ENCODE measurements at regions of chr15 and their contacts with region 1.

Region 1: DNA sequence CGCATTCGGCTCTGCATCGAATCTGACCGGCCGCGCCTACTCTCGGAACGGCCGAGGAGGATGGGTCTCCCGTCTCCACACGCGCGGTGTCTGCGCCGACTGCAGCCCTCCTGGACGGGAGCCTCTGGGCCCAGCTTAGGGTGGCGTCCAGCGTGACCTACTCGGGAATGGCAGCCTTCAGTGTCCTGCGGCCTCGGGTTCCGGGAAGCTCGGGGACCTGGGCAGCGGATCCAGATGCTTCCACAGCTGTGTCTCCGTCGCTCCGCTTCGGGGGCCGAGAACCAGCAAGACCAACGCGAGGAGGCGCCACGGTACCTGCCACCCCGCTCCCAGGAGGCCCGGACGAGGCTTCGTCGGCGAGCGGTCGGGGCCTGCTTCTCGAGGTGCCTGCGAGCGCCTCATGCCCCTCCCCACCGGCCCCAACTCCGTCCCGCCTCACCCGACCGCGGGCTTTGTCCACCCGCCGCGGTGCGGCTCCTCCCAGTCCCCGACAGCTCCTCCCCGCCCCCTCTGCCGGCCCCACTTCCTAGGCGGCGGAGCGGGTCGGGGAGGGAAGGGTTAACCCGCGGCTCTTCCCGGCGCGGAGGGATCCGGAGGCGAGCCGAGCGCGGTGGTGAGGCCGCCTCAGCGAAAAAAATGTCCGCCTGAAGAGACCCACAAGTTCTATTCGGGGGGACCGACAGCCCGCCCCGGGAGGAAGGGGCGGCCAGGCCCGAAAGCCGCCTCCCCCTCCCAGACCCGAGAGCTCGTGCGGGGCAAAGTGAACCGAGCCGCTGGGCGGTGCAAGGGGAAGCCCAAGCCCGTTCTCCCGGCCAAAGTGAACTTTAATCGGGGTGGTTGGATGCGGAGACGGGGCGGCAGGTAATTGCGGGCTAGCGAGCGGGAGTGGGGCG is at the start of gene TCF12:
- DNase-seq: peak; percentile 92
- ATAC-seq: peak; percentile 81
- H3K4me3 Mint-ChIP-seq: peak within 1 kb of the TSS; percentile 92
- H3K27ac Mint-ChIP-seq: peak within 1 kb of the TSS; percentile 80
- H3K4me1 Mint-ChIP-seq: peaks cover 32% of the 10 kb centered on the region
- H3K27me3 Mint-ChIP-seq: no peaks in the 10 kb centered on the region
- CTCF ChIP-seq: no peak
- total RNA-seq, gene TCF12: 88.5 and 119 TPM in 2 replicates

Region 2: DNA sequence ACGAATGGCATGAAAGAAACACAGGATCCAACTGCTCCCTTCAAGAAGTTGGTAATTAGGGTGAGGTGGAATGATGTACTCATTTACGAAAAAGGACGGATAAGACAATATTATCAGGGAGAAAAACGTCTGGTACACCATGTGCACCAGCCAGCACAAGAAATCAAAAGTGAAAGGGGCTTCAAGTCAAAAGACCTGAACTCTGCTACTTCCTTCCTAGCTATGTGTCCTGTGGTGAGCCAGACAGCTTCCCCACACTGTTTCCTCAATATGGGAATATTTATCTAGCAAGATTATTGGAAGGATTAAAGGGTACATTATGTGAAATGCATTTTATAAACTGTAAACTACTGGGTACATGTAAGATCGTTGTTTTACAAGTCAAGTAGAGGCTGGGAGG is 1662.6 kb before region 1 on chr15:
- CTCF ChIA-PET with region 1: no interaction called
- POLR2A ChIA-PET with region 1: no interaction called
- intact Hi-C with region 1: no loop called
- DNase-seq: no peak
- ATAC-seq: peak; percentile 47
- H3K4me3 Mint-ChIP-seq: peak overlapping the region; percentile 74
- H3K27ac Mint-ChIP-seq: peak overlapping the region; percentile 86
- H3K4me1 Mint-ChIP-seq: peaks cover 64% of the 10 kb centered on the region
- H3K27me3 Mint-ChIP-seq: no peaks in the 10 kb centered on the region
- CTCF ChIP-seq: no peak

Region 3: DNA sequence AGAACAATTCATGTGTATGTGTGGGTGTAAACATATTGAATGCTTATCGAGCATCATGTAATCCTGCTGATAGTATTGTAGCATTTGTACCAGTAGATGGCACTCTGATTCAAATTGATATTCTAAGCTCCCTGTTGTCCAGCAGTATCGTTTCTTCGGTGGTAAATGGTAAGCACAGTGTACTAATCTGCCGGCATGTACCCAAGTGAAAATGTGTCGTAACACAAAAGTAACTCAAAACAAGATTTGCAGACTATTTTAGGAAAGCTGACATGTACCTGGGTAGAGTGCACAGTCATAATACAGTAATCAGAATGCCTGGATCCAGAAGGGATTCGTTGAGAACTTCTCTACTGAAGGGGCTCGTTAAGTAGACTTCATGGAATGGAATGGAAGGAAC is 421.7 kb before region 1 on chr15:
- CTCF ChIA-PET with region 1: interaction called, 4 read pairs
- POLR2A ChIA-PET with region 1: interaction called, 3 read pairs
- intact Hi-C with region 1: loop called (anchors 2 kb)
- DNase-seq: no peak
- ATAC-seq: peak; percentile 81
- H3K4me3 Mint-ChIP-seq: peak overlapping the region; percentile 20
- H3K27ac Mint-ChIP-seq: no peak overlapping the region
- H3K4me1 Mint-ChIP-seq: peaks cover 4% of the 10 kb centered on the region
- H3K27me3 Mint-ChIP-seq: no peaks in the 10 kb centered on the region
- CTCF ChIP-seq: no peak

Region 4: DNA sequence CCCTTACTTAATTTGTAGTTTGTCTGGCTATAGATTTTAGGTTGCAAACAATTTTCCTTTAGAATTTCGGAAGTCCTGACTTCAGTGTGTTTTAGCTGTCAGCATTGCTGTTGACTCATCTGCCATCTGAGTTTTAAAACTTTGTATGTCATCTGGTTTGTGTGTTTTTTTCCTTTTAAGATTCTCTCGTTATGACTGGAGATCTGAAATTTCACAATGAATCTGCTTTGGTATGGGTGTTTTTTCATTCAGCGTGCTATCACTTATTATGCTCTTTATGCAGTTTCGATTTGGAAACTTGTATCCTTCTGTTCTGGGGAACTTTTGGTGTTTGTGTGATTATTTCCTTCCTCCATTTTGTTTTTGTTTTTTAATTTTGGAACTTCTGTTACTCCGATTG is 131.3 kb before region 1 on chr15:
- CTCF ChIA-PET with region 1: no interaction called
- POLR2A ChIA-PET with region 1: no interaction called
- intact Hi-C with region 1: no loop called
- DNase-seq: no peak
- ATAC-seq: peak; percentile 31
- H3K4me3 Mint-ChIP-seq: no peak overlapping the region
- H3K27ac Mint-ChIP-seq: no peak overlapping the region
- H3K4me1 Mint-ChIP-seq: peaks cover 6% of the 10 kb centered on the region
- H3K27me3 Mint-ChIP-seq: no peaks in the 10 kb centered on the region
- CTCF ChIP-seq: no peak

Region 5: DNA sequence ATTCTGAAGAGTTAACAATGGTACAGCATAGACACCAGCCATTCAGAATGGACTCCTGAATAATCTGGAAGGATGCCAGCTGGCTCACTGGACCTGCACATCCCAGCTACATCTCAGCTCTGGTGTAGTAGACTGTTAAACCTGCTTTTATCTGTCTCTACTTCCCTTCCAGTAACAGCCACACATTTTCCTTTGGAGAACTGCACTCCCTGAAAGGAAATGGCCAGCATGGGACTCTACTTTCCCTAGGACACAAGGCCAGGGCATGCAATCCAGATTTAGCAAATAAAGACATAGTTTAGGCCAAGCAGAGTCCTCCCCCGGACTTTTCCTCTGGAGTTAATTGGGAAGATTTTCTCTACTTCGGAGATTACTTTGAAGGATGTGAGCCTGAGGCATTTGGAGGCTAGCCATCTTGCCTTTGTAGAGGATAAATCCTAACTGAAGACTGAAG is 82.5 kb before region 1 on chr15:
- CTCF ChIA-PET with region 1: no interaction called
- POLR2A ChIA-PET with region 1: no interaction called
- intact Hi-C with region 1: loop called (anchors 2 kb)
- DNase-seq: no peak
- ATAC-seq: no peak
- H3K4me3 Mint-ChIP-seq: no peak overlapping the region
- H3K27ac Mint-ChIP-seq: no peak overlapping the region
- H3K4me1 Mint-ChIP-seq: peaks cover 38% of the 10 kb centered on the region
- H3K27me3 Mint-ChIP-seq: no peaks in the 10 kb centered on the region
- CTCF ChIP-seq: no peak

Region 6: GRCh38 chr15:57036352-57036751 is 118.1 kb after region 1 on chr15:
- CTCF ChIA-PET with region 1: no interaction called
- POLR2A ChIA-PET with region 1: no interaction called
- intact Hi-C with region 1: loop called (anchors 5 kb)
- DNase-seq: no peak
- ATAC-seq: no peak
- H3K4me3 Mint-ChIP-seq: no peak overlapping the region
- H3K27ac Mint-ChIP-seq: no peak overlapping the region
- H3K4me1 Mint-ChIP-seq: peaks cover 63% of the 10 kb centered on the region
- H3K27me3 Mint-ChIP-seq: no peaks in the 10 kb centered on the region
- CTCF ChIP-seq: no peak

Region 7: DNA sequence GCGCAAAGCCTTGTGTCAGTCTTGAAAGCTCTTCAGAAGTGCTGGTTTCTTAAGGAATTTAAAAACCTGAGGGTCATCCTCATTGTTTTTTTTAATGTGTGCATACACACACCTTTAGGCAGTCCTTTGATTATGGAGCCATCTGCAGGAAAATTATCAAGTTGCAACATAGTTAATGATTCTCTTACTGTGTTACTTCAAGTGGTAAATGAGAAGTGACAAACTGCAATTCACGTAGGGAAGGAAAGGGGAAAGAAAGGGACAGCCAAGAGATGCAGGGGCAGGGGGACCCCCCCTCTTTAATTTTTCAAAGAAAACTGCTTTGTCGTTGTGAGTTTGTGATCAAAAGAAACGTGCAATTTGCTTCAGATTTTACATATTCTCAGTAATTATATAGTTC is 295.6 kb after region 1 on chr15:
- CTCF ChIA-PET with region 1: interaction called, 4 read pairs
- POLR2A ChIA-PET with region 1: no interaction called
- intact Hi-C with region 1: loop called (anchors 1 kb)
- DNase-seq: no peak
- ATAC-seq: peak; percentile 65
- H3K4me3 Mint-ChIP-seq: no peak overlapping the region
- H3K27ac Mint-ChIP-seq: no peak overlapping the region
- H3K4me1 Mint-ChIP-seq: peaks cover 32% of the 10 kb centered on the region
- H3K27me3 Mint-ChIP-seq: no peaks in the 10 kb centered on the region
- CTCF ChIP-seq: no peak

Measured in activated B cell treated with CpG ODN at 0.5 μM for 24 hours (primary cell).